Activated T-helper 2 cell treated with anti-CD3 and anti-CD28 coated beads, Interferon-gamma antibody, Interleukin-2, Interleukin-4, amounts not matched to agents 10 μg/mL and 5 μg/mL and 100 μg/mL, durations not matched to agents 14 hours and 24 hours and 36 hours (primary cell): ENCODE measurements at regions of chr3 and their contacts with region 1.

Region 1: DNA sequence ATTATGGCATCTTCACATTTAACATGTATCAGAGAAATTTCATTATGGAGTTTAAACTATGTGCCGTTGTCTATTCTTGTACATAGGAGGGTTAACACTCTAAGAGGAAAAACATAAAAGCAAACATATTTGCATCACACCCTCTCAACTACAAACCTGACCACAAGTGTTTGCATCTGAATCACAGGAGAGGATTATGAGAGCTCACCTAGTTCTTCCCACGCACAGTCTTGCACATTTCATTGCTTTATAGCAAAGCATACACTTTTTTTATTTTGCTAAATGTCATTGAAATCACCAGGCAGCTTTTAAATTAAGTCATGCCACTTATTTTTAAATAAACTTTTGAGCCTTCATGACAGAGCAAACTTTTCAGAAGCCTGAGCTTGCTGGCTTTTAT is 12.5 kb downstream of the TRAT1 start:
- DNase-seq: no peak
- H3K4me3 Mint-ChIP-seq: peak overlapping the region; percentile 81
- H3K27ac Mint-ChIP-seq: peak overlapping the region; percentile 98
- H3K4me1 Mint-ChIP-seq: peaks cover 80% of the 10 kb centered on the region
- H3K27me3 Mint-ChIP-seq: no peaks in the 10 kb centered on the region

Region 2: DNA sequence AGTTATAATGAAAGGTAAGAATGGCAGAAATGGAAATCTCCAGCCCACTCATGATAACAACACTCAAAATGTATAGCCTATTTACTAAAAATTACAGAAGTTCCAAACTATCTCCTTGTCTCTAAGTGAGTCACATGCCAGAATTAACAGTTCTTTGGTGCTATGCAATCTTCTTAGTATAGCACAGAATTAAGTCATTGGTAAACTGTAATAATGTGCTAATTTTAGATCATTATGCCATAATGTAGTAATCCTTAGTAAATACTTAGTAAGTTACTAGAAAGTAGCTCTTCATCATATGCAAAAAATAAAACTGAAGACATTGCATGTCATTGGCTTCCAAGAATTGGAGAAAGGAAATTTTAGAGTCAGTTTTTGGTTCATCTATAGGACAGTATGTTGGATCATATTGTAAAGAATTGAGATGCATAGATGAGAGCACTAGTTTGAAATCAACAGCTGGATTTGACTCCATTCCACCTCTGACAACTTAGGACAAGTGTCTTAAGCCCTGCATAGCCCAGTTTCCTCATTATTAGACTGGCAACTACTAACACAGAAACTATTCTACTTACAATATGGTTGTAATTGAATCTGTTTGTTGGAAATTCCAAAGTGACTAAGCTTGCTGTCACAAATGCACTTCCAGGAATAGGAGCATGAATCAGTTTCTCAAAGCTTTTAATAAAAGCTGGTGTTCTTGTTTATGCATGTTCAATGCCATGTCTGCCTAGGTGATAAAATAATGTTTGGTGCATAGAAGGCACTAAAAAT is 704.2 kb before region 1 on chr3:
- intact Hi-C with region 1: loop called (anchors 2 kb)
- DNase-seq: no peak
- H3K4me3 Mint-ChIP-seq: peak overlapping the region; percentile 27
- H3K27ac Mint-ChIP-seq: peak overlapping the region; percentile 91
- H3K4me1 Mint-ChIP-seq: peaks cover 80% of the 10 kb centered on the region
- H3K27me3 Mint-ChIP-seq: no peaks in the 10 kb centered on the region

Region 3: GRCh38 chr3:108493862-108494261 is 341.2 kb before region 1 on chr3:
- intact Hi-C with region 1: no loop called
- DNase-seq: no peak
- H3K4me3 Mint-ChIP-seq: no peak overlapping the region
- H3K27ac Mint-ChIP-seq: no peak overlapping the region
- H3K4me1 Mint-ChIP-seq: peaks cover 6% of the 10 kb centered on the region
- H3K27me3 Mint-ChIP-seq: peaks cover 7% of the 10 kb centered on the region

Region 4: GRCh38 chr3:108667312-108667711 is 167.8 kb before region 1 on chr3:
- intact Hi-C with region 1: loop called (anchors 1 kb)
- DNase-seq: no peak
- H3K4me3 Mint-ChIP-seq: no peak overlapping the region
- H3K27ac Mint-ChIP-seq: peak overlapping the region; percentile 42
- H3K4me1 Mint-ChIP-seq: peaks cover 33% of the 10 kb centered on the region
- H3K27me3 Mint-ChIP-seq: no peaks in the 10 kb centered on the region

Region 5: DNA sequence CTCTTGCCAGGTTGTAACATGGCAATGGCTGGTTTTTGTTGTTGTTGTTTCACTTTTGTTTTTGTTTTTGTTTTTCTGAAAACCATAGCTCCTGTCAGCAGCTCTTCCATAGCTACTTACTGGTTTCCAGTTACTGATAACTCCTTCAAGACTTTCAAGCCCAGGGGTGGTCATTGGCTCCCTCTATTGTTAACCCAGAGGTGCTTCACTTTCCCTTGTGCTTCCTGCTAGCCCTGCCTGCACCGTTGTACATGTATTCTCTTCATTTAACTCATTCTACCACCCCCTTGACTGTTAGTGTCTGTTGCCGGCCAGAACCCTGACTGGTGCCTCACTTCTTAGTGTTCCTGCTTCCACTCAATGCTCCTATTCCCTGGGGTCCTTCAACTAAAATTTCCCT is 16.7 kb before region 1 on chr3:
- intact Hi-C with region 1: loop called (anchors 1 kb)
- DNase-seq: peak; percentile 54
- H3K4me3 Mint-ChIP-seq: no peak overlapping the region
- H3K27ac Mint-ChIP-seq: peak overlapping the region; percentile 26
- H3K4me1 Mint-ChIP-seq: peaks cover 30% of the 10 kb centered on the region
- H3K27me3 Mint-ChIP-seq: no peaks in the 10 kb centered on the region

Region 6: DNA sequence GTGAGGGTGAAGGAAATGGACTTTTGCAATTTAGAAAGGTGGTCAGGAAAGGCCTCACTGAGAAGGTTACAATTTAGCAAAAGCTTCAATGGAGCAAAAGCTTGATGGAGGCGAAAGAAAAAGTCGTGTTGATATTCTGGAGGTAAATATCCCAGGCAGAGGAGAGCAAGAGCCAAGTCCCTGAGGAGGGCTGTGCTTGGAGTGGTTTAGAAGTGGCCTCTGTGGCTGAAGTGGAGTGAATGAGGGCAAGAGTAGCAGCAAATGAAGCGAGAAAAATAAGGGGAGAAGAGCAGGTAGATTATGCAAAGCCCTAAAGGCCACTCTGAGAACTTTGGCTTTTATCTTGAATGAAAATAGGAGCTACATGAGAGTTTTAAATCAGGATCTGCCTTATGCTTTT is 64.4 kb after region 1 on chr3:
- intact Hi-C with region 1: no loop called
- DNase-seq: no peak
- H3K4me3 Mint-ChIP-seq: no peak overlapping the region
- H3K27ac Mint-ChIP-seq: no peak overlapping the region
- H3K4me1 Mint-ChIP-seq: peaks cover 23% of the 10 kb centered on the region
- H3K27me3 Mint-ChIP-seq: peaks cover 2% of the 10 kb centered on the region

Region 7: DNA sequence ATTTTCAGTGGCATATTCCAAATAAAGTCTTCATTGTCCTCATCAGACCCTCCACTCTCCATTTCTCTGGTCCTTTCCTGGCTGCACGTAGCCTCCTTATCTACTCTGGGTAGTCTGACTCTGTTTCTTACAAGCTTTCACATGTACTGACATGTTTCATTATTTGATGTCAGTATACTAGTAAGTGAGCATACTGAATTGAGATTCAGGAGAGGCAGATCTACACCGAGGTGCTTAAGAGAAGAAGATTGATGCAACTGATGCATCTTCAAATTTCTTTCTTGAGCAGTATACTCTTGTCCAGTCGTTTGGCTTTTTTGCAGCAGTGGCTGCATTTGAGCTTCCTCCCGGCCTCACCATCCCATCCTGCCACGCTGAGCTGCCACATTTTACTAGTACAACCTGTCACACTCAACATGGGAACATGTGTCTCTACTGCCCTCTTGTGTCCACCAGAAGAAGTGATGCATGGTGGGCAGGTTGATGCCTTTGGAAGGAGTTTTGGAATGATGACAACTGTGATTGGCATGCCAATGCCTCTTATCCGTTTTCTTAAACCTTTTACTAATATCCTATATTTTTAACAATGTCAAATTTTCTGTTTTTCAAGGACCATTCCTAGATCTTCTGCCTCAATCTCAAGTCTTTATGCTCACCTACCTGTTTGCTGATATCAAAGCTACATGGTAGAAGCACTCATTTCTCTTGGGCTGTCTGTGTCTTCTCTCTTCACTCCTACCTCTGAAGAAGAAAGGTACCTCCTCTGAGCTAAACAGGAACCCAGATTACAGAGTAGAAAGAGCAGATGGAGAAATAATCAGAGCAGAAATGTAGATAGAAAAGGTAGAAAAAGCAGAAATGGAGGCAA is 79.9 kb after region 1 on chr3:
- intact Hi-C with region 1: loop called (anchors 5 kb)
- DNase-seq: peak; percentile 57
- H3K4me3 Mint-ChIP-seq: peak overlapping the region; percentile 5
- H3K27ac Mint-ChIP-seq: no peak overlapping the region
- H3K4me1 Mint-ChIP-seq: peaks cover 16% of the 10 kb centered on the region
- H3K27me3 Mint-ChIP-seq: peaks cover 19% of the 10 kb centered on the region

Region 8: DNA sequence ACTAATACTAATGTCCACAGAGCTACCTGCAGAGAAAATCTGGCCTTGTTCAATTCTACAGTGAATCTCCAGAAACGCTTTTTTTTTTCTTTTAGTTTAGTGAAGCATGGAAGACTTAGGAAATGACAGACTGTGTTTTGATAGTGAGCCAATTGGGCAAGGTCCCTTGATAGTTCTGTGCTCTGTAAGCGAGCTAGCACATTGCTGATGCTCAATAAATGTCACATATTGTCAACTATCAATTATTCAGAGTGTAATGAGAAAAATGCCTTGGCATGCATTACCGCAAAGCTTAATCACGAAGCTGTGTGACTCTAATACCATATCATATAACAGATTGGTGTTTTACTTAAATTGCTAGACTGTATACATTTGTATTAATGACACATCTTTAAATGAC is 296.2 kb after region 1 on chr3:
- intact Hi-C with region 1: no loop called
- DNase-seq: no peak
- H3K4me3 Mint-ChIP-seq: no peak overlapping the region
- H3K27ac Mint-ChIP-seq: no peak overlapping the region
- H3K4me1 Mint-ChIP-seq: no peaks in the 10 kb centered on the region
- H3K27me3 Mint-ChIP-seq: no peaks in the 10 kb centered on the region